ENCODE measurements at regions of chr3 and their contacts with region 1.

Region 1: GRCh38 chr3:195542698-195543499 is at the start of gene PPP1R2:
- DNase-seq: peak; percentile 86
- H3K4me3 ChIP-seq: peak within 1 kb of the TSS; percentile 76 to 93 (median 88)
- H3K27ac ChIP-seq: peak within 1 kb of the TSS; percentile 74
- H3K4me1 ChIP-seq: peaks cover 26% of the 10 kb centered on the region
- H3K27me3 ChIP-seq: no peaks in the 10 kb centered on the region
- CTCF ChIP-seq: no peak
- total RNA-seq, gene PPP1R2: 45.5 to 129 TPM

Region 2: GRCh38 chr3:194671900-194672808 is 870.7 kb before region 1 on chr3 and contains the start of gene LSG1:
- CTCF ChIA-PET with region 1: no interaction called
- dilution Hi-C with region 1: no loop called
- in situ Hi-C with region 1: loop called (anchors 25 kb)
- intact Hi-C with region 1: no loop called
- DNase-seq: peak; percentile 90
- H3K4me3 ChIP-seq: peak within 1 kb of the TSS; percentile 57 to 96 (median 95)
- H3K27ac ChIP-seq: peak within 1 kb of the TSS; percentile 98
- H3K4me1 ChIP-seq: peaks cover 21% of the 10 kb centered on the region
- H3K27me3 ChIP-seq: no peaks in the 10 kb centered on the region
- CTCF ChIP-seq: no peak
- total RNA-seq, gene LSG1: 33.5 to 33.8 TPM

Region 3: GRCh38 chr3:195421393-195421792 is 121.5 kb before region 1 on chr3:
- CTCF ChIA-PET with region 1: interaction called, 16 read pairs
- dilution Hi-C with region 1: no loop called
- in situ Hi-C with region 1: no loop called
- intact Hi-C with region 1: no loop called
- DNase-seq: no peak
- H3K4me3 ChIP-seq: no peak overlapping the region
- H3K27ac ChIP-seq: no peak overlapping the region
- H3K4me1 ChIP-seq: peaks cover 4% of the 10 kb centered on the region
- H3K27me3 ChIP-seq: no peaks in the 10 kb centered on the region
- CTCF ChIP-seq: no peak

Region 4: DNA sequence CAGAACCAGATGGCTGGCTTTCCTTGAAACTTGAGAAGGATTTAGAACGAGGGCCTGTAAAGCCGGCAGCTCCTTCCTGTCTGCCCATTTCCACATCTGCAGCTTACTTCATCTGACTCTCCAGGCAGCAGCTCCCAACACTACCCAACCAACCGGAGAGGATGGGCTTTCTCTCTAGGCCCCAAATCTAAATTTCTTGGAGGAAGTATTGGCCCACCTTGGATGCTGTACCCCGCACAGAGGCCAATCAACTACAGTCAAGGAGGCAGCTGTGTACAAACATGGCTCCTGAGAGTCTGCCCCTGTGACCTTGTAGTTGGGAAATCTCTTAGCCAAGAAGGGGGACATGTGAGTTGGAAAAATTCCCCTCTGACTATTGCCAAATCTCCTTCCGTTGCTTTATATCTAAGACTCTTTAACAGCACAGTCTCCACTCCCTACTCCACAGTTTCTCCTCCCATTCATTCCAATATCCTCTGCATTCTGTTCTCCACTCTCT is 92.1 kb before region 1 on chr3:
- CTCF ChIA-PET with region 1: no interaction called
- dilution Hi-C with region 1: no loop called
- in situ Hi-C with region 1: no loop called
- intact Hi-C with region 1: no loop called
- DNase-seq: no peak
- H3K4me3 ChIP-seq: no peak overlapping the region
- H3K27ac ChIP-seq: no peak overlapping the region
- H3K4me1 ChIP-seq: no peaks in the 10 kb centered on the region
- H3K27me3 ChIP-seq: no peaks in the 10 kb centered on the region
- CTCF ChIP-seq: no peak